ENCODE measurements at regions of chr2 and their contacts with region 1.

Region 1: DNA sequence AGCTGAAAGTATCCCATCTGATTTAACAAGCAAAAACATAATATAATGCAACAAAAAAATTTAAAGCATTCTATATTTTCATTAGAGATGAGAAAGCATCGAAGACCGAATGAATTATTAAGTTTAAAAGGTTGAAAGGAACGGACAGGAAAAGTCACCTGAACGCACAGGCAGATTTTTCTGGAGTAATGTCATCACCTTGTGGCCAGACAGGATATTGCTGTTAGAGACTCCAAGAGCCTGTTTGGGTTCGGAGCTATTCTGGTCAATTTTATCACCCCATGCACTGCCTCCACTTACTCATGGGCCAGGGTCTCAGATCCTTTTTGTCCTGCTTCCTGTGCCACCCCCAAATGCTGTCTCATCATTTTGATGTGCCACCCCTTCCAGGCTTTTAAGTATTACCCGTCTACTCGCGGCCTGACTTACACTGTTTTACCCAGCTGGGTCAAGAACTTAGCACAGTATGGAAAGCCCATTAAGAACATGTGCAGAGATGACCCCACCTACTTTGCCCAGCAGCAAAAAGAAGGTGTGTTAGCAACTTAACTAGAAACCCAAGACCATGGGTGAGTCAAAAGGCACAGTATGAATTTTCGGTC is 27.3 kb downstream of the GKN2 start:
- DNase-seq: no peak
- H3K4me3 ChIP-seq: no peak overlapping the region
- CTCF ChIP-seq: peak; percentile 72

Region 2: GRCh38 chr2:68693946-68694345 is 231.4 kb before region 1 on chr2:
- CTCF ChIA-PET with region 1: no interaction called
- POLR2A ChIA-PET with region 1: no interaction called
- DNase-seq: no peak
- H3K4me3 ChIP-seq: no peak overlapping the region
- CTCF ChIP-seq: no peak

Region 3: DNA sequence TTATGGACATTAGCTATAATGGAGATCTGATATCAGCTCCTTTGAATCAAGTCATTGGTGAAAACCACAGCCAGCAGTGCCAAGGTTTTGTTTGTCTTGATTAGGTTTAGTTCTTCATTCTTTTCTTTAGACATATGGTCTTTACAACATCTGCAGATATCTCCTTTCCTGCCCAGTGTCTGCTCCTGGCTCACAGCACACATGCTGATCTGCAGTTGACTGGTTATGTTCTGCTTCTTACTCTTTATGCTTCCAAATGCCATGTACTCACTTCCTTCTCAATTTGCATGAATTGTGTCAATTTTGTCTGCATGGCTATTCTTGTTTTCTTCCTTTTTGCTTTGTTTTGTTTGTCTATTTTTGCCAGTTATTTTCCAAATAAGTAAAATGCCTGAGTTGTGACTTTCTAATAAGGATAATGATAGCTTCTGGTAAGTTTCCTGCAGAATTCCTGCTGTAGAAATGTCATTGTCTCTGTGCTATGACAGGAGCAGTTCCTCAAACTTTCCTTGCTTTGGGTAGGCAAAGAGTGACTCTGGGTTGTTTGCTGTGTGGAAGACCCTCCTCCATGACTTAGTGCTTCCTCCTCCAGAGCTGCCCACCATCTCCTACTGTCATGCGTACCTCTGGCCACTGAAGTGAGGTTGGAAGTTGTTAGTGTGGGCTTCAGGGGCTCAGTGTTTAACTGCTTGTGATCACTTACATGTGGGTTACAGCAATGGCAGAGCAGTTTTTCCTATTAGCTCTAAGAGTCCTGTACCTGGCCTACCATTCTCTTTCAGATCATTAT is 182.6 kb before region 1 on chr2:
- CTCF ChIA-PET with region 1: interaction called, 49 read pairs
- POLR2A ChIA-PET with region 1: no interaction called
- DNase-seq: no peak
- H3K4me3 ChIP-seq: no peak overlapping the region
- CTCF ChIP-seq: no peak

Region 4: GRCh38 chr2:68909793-68910674 is 15.4 kb before region 1 on chr2:
- CTCF ChIA-PET with region 1: interaction called, 32 read pairs
- POLR2A ChIA-PET with region 1: no interaction called
- DNase-seq: no peak
- H3K4me3 ChIP-seq: no peak overlapping the region
- CTCF ChIP-seq: peak; percentile 80

Region 5: DNA sequence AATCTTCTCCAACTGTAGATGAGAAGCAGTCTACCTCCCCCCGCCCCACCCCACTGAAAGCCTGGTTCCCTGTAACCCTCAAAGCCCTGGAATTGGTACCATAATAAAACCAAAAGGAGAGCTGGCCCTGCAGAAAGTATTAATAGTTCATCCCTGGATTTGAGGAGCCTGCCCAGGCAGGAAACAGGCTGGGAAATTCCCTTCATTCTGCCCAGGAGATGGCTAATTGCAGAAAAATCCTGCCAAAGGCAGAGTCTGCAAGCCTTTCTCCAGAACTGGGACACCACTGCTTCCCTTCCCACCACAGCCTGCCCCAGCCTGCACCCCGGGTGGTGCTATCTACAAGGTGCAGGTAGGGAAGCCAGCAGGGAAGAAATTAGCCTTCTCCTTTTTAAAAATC is 11.0 kb after region 1 on chr2:
- CTCF ChIA-PET with region 1: interaction called, 16 read pairs
- POLR2A ChIA-PET with region 1: no interaction called
- DNase-seq: peak; percentile 31
- H3K4me3 ChIP-seq: no peak overlapping the region
- CTCF ChIP-seq: no peak